Panc1 (cell line): ENCODE measurements at regions of chr17 and their contacts with region 1.

Region 1: GRCh38 chr17:75940724-75941441 is at the start of gene FBF1:
- DNase-seq: peak; percentile 53
- ATAC-seq: peak; percentile 100
- H3K4me3 ChIP-seq: peak within 1 kb of the TSS; percentile 71 to 77
- H3K27ac ChIP-seq: peak within 1 kb of the TSS; percentile 89
- H3K4me1 ChIP-seq: peaks cover 10% of the 10 kb centered on the region; the same call in 1 of the 2 replicates
- H3K27me3 ChIP-seq: no peaks in the 10 kb centered on the region
- CTCF ChIP-seq: no peak
- total RNA-seq, gene FBF1: 32.5 TPM

Region 2: GRCh38 chr17:75950821-75951554 is 10.1 kb after region 1 on chr17:
- CTCF ChIA-PET with region 1: no interaction called
- POLR2A ChIA-PET with region 1: interaction called, 15 read pairs
- in situ Hi-C with region 1: no loop called
- intact Hi-C with region 1: no loop called
- DNase-seq: no peak
- ATAC-seq: no peak
- H3K4me3 ChIP-seq: no peak overlapping the region
- H3K27ac ChIP-seq: no peak overlapping the region
- H3K4me1 ChIP-seq: no peaks in the 10 kb centered on the region
- H3K27me3 ChIP-seq: no peaks in the 10 kb centered on the region
- CTCF ChIP-seq: no peak

Region 3: DNA sequence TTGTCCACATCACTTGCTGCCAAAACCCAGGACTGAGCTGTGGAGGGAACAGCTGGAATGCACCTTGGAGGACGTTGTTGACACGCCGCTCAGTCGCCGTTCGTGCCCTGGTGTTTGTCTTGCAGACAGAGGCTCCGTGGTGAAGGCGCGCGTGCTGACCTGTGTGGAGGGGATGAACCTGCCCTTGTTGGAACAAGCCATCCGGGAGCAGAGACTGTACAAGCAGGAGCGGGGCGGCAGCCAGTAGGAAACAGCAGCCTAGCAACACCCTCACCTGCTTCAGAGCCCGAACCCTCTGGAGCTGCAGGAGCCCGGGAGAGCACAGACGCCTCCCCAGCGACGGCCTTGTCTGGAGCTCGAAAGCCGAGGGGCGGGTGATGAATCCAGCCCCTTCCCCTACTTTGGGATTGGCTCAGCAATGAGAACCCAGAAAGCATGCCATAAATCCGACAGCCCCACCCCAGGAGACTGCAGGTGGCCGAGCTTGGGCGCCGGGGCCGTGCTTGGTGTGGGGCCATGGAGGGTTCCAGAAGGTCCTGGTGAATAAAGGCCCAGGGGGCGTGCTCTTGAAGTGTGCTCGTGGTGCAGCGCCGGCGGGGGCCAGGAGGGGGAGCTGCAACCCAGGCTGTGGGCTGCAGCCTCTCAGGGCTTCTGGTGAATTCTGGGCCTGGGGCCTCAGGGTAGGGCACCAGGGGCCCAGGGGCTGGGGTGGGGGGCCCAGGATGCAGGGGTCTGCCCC is 59.3 kb after region 1 on chr17:
- CTCF ChIA-PET with region 1: interaction called, 10 read pairs
- POLR2A ChIA-PET with region 1: no interaction called
- in situ Hi-C with region 1: no loop called
- intact Hi-C with region 1: no loop called
- DNase-seq: no peak
- ATAC-seq: peak; percentile 61
- H3K4me3 ChIP-seq: no peak overlapping the region
- H3K27ac ChIP-seq: no peak overlapping the region
- H3K4me1 ChIP-seq: peaks cover 11% of the 10 kb centered on the region
- H3K27me3 ChIP-seq: no peaks in the 10 kb centered on the region
- CTCF ChIP-seq: peak; percentile 98

Region 4: GRCh38 chr17:76072148-76072858 is 131.4 kb after region 1 on chr17 and contains the start of gene SRP68:
- CTCF ChIA-PET with region 1: no interaction called
- POLR2A ChIA-PET with region 1: no interaction called
- in situ Hi-C with region 1: loop called (anchors 25 kb)
- intact Hi-C with region 1: no loop called
- DNase-seq: no peak
- ATAC-seq: peak; percentile 99
- H3K4me3 ChIP-seq: peak within 1 kb of the TSS; percentile 88 to 92
- H3K27ac ChIP-seq: peak within 1 kb of the TSS; percentile 92
- H3K4me1 ChIP-seq: peaks cover 7% of the 10 kb centered on the region
- H3K27me3 ChIP-seq: no peaks in the 10 kb centered on the region
- CTCF ChIP-seq: no peak
- total RNA-seq, gene SRP68: 100 TPM